ENCODE measurements at regions of chr4 and their contacts with region 1.

Region 1: DNA sequence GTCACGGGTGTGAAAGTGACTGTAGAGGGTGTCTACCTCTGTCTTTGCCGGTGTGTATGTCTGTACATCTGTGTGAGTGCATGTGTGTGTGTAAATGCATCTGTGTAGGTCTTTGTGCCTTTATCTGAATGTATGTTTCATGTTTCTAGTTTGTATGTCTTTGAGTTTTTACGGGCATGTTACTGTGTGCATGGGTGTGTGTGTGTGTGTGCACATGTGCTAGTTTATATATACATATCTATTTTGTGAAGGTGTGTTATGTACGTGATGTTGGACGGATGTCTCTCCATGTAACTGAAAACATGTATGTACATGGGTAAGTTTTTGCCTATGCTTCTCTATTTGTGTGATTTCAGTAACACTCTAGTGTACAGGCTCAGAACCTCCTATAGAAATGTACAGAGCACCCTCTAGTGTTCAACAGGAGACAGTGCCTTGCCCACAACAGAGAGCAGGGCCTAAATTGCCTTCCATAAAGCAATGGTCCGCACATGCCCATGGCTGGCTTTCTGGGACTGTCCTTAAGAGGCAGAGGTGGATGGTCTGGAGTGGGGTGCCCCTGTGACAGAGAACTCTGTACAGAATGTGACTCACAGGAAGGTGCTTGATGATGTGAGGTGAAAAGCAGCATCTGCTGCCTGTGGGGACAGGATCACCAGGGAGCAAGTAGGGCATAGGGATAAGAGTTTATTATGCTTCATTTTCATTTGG is 343.5 kb downstream of the RAPGEF2 start:
- DNase-seq: peak in 1 of 9 donors; percentile 24
- ATAC-seq: peak; percentile 87
- H3K4me3 ChIP-seq: no peak overlapping the region
- H3K4me3 Mint-ChIP-seq: no peak overlapping the region
- H3K27ac ChIP-seq: no peak overlapping the region
- H3K27ac Mint-ChIP-seq: no peak overlapping the region
- H3K4me1 ChIP-seq: no peaks in the 10 kb centered on the region
- H3K4me1 Mint-ChIP-seq: peaks cover 0 to 2% (median 0%) of the 10 kb centered on the region in 7 donors
- H3K27me3 ChIP-seq: no peaks in the 10 kb centered on the region
- H3K27me3 Mint-ChIP-seq: peaks cover 5 to 19% (median 11%) of the 10 kb centered on the region in 5 donors

Region 2: DNA sequence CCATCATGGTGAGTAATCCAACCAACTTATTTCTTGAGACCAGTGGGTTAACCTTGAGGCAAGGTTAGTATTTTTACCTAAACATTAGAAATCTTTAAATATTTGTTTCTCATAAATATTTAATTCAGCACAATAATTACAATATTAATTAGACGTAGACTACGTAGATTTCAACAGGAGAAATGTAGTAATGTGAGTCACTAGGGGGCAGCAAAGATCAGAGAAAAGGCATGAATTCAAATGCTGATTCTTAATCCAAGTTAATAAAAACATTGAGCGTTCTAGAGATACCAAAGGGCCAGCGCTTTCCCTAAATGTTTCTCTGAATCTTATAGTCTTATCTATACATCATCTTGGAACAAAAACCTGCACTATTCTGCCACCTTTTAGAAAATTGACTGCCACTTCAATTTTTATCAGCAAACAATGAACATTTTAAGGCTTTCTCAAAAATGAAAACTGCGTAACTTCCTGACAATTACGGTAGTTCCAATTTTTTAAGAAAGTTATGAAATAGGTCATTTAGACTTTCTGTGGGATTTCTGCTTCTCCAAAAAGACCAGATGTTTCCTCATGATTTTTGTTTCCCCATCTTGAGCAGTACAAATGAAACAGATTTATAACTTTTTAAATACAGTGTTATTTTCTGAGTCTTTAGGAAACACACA is 1454.2 kb before region 1 on chr4:
- CTCF ChIA-PET with region 1: no interaction called
- POLR2A ChIA-PET with region 1: no interaction called
- intact Hi-C with region 1: loop called in 1 of 2 experiments (anchors 10 kb)
- DNase-seq: peak in 5 of 9 donors; percentile 18 to 26 (median 20)
- ATAC-seq: peak; percentile 61
- H3K4me3 ChIP-seq: peak overlapping the region; percentile 19
- H3K4me3 Mint-ChIP-seq: peak overlapping the region in 6 of 10 donors; percentile 32 to 57 (median 48)
- H3K27ac ChIP-seq: no peak overlapping the region
- H3K27ac Mint-ChIP-seq: no peak overlapping the region
- H3K4me1 ChIP-seq: no peaks in the 10 kb centered on the region
- H3K4me1 Mint-ChIP-seq: peaks cover 0 to 2% (median 0%) of the 10 kb centered on the region in 7 donors
- H3K27me3 ChIP-seq: peaks cover 0 to 3% of the 10 kb centered on the region in 2 donors
- H3K27me3 Mint-ChIP-seq: peaks cover 0 to 6% (median 3%) of the 10 kb centered on the region in 5 donors

Region 3: GRCh38 chr4:158253350-158253980 is 1193.0 kb before region 1 on chr4:
- CTCF ChIA-PET with region 1: no interaction called
- POLR2A ChIA-PET with region 1: no interaction called
- intact Hi-C with region 1: loop called in 1 of 2 experiments (anchors 1 kb)
- DNase-seq: peak in 7 of 9 donors; percentile 2 to 51 (median 26)
- ATAC-seq: peak; percentile 73
- H3K4me3 ChIP-seq: no peak overlapping the region
- H3K4me3 Mint-ChIP-seq: peak overlapping the region in 1 of 10 donors; percentile 19
- H3K27ac ChIP-seq: no peak overlapping the region
- H3K27ac Mint-ChIP-seq: no peak overlapping the region
- H3K4me1 ChIP-seq: no peaks in the 10 kb centered on the region
- H3K4me1 Mint-ChIP-seq: peaks cover 3 to 14% (median 12%) of the 10 kb centered on the region in 7 donors
- H3K27me3 ChIP-seq: peaks cover 0 to 5% of the 10 kb centered on the region in 2 donors
- H3K27me3 Mint-ChIP-seq: peaks cover 0 to 13% (median 9%) of the 10 kb centered on the region in 5 donors

Region 4: DNA sequence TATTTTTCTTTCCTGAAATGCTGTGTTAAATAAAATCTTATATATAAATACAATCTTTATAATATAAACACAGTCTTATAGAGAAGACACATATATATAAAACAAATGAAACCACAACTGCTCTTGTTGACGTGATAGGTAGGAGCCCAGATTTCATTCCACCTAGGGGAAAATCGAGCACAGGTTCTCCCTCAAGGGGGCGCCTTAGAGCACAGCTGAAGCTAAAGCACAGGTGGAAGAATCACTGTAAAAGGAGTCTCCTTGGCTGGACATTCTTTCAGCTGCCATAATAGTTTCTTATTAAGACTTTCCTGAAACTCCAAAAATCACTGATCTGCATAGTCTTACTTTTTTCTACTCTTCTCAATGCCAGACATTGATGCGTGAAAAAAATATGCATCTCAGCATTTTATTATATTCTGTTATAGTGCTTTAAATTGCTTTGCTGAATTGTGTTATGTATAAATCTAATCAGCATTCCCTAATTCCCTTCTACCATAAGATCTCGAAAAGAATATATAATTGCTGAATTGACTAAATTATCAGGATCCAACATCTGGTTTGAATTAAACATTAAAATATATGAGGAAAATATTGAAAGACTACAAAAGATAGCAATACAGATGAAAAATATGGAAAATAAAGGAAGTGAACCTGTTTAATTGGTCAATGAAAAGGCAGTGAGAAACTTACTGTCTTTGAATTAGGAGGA is 950.2 kb before region 1 on chr4:
- CTCF ChIA-PET with region 1: no interaction called
- POLR2A ChIA-PET with region 1: no interaction called
- intact Hi-C with region 1: loop called in 1 of 2 experiments (anchors 5 kb)
- DNase-seq: peak in 2 of 9 donors; percentile 1 to 32
- ATAC-seq: no peak
- H3K4me3 ChIP-seq: no peak overlapping the region
- H3K4me3 Mint-ChIP-seq: no peak overlapping the region
- H3K27ac ChIP-seq: no peak overlapping the region
- H3K27ac Mint-ChIP-seq: no peak overlapping the region
- H3K4me1 ChIP-seq: no peaks in the 10 kb centered on the region
- H3K4me1 Mint-ChIP-seq: no peaks in the 10 kb centered on the region
- H3K27me3 ChIP-seq: no peaks in the 10 kb centered on the region
- H3K27me3 Mint-ChIP-seq: peaks cover 0 to 16% (median 7%) of the 10 kb centered on the region in 5 donors

Region 5: DNA sequence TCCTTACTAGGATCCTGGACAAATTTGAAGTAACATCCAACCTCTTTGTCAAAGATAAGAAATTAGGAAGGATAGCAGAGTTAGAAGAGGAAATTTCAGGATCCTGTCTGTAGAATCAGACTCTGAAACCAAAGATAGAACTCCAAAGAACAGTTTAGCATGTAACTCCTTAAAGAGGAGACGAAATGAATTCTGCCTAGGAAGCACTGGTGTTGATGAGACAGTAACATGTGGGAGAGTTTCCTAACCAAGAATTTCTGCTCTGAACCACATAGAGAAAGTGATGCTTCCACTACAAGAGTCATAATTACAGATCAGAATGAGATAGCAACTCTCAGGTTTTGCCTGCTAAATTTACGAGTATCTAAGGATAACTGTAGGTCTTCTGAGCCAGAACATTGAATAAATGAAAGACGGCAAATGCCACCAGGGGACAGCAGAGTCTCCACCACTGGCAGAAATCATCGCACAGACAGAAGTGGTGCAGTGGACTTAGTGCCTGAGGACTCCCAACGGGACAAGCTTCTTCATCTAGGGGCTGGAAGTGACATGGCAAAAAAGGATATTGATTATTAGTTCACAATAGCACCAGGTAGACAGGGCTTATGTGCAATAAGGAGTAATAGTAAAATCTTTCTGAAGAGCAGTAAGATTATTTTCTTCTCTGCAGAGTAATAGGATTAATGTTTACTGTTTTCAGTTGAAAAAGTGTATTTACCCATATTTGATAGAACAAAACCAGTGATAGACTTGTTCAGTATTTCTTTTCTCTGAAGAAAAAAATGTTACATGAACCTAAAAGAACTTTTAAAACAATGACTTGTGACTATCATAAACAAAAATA is 716.5 kb before region 1 on chr4:
- CTCF ChIA-PET with region 1: no interaction called
- POLR2A ChIA-PET with region 1: no interaction called
- intact Hi-C with region 1: loop called in 1 of 2 experiments (anchors 1 kb)
- DNase-seq: peak; percentile 18 to 57 (median 44)
- ATAC-seq: peak; percentile 93
- H3K4me3 ChIP-seq: no peak overlapping the region
- H3K4me3 Mint-ChIP-seq: no peak overlapping the region
- H3K27ac ChIP-seq: no peak overlapping the region
- H3K27ac Mint-ChIP-seq: no peak overlapping the region
- H3K4me1 ChIP-seq: no peaks in the 10 kb centered on the region
- H3K4me1 Mint-ChIP-seq: peaks cover 0 to 23% (median 0%) of the 10 kb centered on the region in 7 donors
- H3K27me3 ChIP-seq: no peaks in the 10 kb centered on the region
- H3K27me3 Mint-ChIP-seq: peaks cover 26 to 42% (median 32%) of the 10 kb centered on the region in 5 donors

Region 6: DNA sequence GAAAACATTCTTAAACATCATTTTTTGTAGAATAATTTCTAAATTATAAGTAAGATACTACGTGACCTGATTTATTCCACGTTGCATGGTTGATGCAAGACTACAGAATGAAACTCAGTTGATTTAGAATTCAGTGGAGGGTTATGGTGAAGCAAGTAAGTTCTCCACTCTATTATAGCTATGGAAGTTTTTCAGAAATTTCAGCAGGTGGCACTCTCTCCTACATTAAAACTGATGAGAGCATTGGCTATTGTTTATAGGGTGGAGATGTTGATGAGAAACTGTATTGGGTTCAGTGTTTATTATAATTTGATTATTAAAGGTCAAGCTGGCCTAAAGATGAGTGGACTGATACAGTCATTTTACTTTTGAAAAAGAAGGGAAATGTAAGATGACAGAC is 589.6 kb before region 1 on chr4:
- CTCF ChIA-PET with region 1: no interaction called
- POLR2A ChIA-PET with region 1: no interaction called
- intact Hi-C with region 1: loop called in 1 of 2 experiments (anchors 1 kb)
- DNase-seq: peak in 3 of 9 donors; percentile 3 to 16 (median 13)
- ATAC-seq: peak; percentile 79
- H3K4me3 ChIP-seq: no peak overlapping the region
- H3K4me3 Mint-ChIP-seq: no peak overlapping the region
- H3K27ac ChIP-seq: no peak overlapping the region
- H3K27ac Mint-ChIP-seq: no peak overlapping the region
- H3K4me1 ChIP-seq: no peaks in the 10 kb centered on the region
- H3K4me1 Mint-ChIP-seq: peaks cover 0 to 10% (median 0%) of the 10 kb centered on the region in 7 donors
- H3K27me3 ChIP-seq: no peaks in the 10 kb centered on the region
- H3K27me3 Mint-ChIP-seq: no peaks in the 10 kb centered on the region

Measured in naive thymus-derived CD4-positive, alpha-beta T cell (primary cell).